ENCODE measurements at regions of chr2 and their contacts with region 1.

Region 1: GRCh38 chr2:196233021-196233804 is 61.8 kb upstream of the STK17B start:
- DNase-seq: no peak
- ATAC-seq: no peak
- H3K4me3 ChIP-seq: peak overlapping the region; percentile 19
- H3K4me3 Mint-ChIP-seq: peak overlapping the region in 8 of 10 donors; percentile 29 to 71 (median 46)
- H3K27ac ChIP-seq: peak overlapping the region; percentile 84
- H3K27ac Mint-ChIP-seq: peak overlapping the region; percentile 89 to 99 (median 97)
- H3K4me1 ChIP-seq: peaks cover 31 to 72% of the 10 kb centered on the region in 2 donors
- H3K4me1 Mint-ChIP-seq: peaks cover 36 to 97% (median 89%) of the 10 kb centered on the region in 7 donors
- H3K27me3 ChIP-seq: no peaks in the 10 kb centered on the region
- H3K27me3 Mint-ChIP-seq: no peaks in the 10 kb centered on the region

Region 2: DNA sequence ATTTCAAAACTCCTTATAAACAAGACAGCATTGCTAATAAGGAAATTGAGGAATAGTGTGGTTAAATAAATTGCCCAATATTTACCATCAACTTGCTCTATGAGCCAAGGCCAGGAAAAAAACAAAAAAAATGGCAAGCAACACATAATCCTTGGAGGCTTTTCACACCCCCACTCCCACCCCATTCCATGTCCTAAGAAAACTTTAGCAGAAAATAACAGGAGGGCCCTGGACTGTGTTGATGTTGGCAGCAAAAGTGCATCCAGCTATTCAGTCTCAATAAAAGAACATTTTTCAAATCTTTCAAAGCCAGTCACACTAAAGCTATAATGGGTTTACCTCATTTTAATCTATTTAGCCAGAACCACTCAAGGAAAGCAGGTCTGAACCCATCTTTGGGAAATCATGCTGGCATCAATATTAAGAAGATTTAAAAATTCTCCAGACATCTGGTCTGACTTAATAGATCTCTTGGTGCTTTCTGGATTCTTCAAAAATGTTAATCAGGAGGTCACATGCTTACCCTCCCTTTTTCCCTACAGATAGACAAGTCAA is 27.3 kb before region 1 on chr2:
- CTCF ChIA-PET with region 1: interaction called, 3 read pairs
- POLR2A ChIA-PET with region 1: interaction called, 12 read pairs
- intact Hi-C with region 1: loop called (anchors 1 kb)
- DNase-seq: no peak
- ATAC-seq: no peak
- H3K4me3 ChIP-seq: no peak overlapping the region
- H3K4me3 Mint-ChIP-seq: no peak overlapping the region
- H3K27ac ChIP-seq: no peak overlapping the region
- H3K27ac Mint-ChIP-seq: peak overlapping the region in 7 of 9 donors; percentile 28 to 85 (median 66)
- H3K4me1 ChIP-seq: peaks cover 17 to 31% of the 10 kb centered on the region in 2 donors
- H3K4me1 Mint-ChIP-seq: peaks cover 29 to 75% (median 51%) of the 10 kb centered on the region in 7 donors
- H3K27me3 ChIP-seq: no peaks in the 10 kb centered on the region
- H3K27me3 Mint-ChIP-seq: no peaks in the 10 kb centered on the region

Region 3: DNA sequence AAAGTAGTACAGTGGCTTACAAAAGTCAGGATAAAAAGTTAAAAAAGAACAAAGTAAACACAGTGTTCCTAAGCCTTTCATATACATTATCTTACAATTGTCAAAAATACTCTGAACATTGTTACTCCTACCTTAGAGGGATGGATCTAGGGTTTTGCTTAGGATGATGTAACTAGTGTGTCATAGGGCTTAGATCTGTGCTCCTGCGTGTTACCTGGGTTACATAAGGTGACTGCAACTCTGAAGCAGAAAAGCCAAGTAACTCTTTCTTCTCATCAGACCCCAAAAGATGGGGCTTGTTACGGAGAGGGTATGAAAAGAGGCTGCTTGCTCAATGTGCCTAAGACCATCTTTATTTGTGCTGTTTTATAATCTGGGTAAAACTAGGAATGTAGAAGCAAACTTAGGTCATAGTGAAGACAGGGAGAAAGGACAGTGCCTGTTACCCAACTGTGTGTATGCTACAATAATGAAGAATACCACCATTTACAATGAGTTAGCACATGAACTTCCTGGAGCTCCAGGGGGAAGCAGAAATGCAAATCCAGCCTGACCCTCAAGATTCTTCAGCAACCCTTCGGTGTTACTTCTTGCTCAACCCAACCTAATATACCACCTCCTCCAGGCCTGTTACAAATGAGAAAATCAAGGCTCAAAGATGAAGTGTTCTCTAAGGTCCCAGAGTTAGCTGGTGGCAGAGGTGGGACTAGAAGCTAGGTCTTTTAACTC is 19.8 kb before region 1 on chr2:
- CTCF ChIA-PET with region 1: interaction called, 5 read pairs
- POLR2A ChIA-PET with region 1: interaction called, 28 read pairs
- intact Hi-C with region 1: loop called (anchors 1 kb)
- DNase-seq: peak in 7 of 9 donors; percentile 29 to 77 (median 58)
- ATAC-seq: peak; percentile 36
- H3K4me3 ChIP-seq: no peak overlapping the region
- H3K4me3 Mint-ChIP-seq: peak overlapping the region in 9 of 10 donors; percentile 0 to 94 (median 61)
- H3K27ac ChIP-seq: peak overlapping the region; percentile 78
- H3K27ac Mint-ChIP-seq: peak overlapping the region in 8 of 9 donors; percentile 95 to 100 (median 98)
- H3K4me1 ChIP-seq: peaks cover 14 to 57% of the 10 kb centered on the region in 2 donors
- H3K4me1 Mint-ChIP-seq: peaks cover 51 to 96% (median 94%) of the 10 kb centered on the region in 7 donors
- H3K27me3 ChIP-seq: no peaks in the 10 kb centered on the region
- H3K27me3 Mint-ChIP-seq: no peaks in the 10 kb centered on the region

Region 4: GRCh38 chr2:196249860-196250259 is 16.6 kb after region 1 on chr2:
- CTCF ChIA-PET with region 1: interaction called, 5 read pairs
- POLR2A ChIA-PET with region 1: interaction called, 215 read pairs
- intact Hi-C with region 1: no loop called
- DNase-seq: no peak
- ATAC-seq: peak; percentile 80
- H3K4me3 ChIP-seq: no peak overlapping the region
- H3K4me3 Mint-ChIP-seq: peak overlapping the region; percentile 4 to 69 (median 44)
- H3K27ac ChIP-seq: no peak overlapping the region
- H3K27ac Mint-ChIP-seq: peak overlapping the region; percentile 15 to 89 (median 80)
- H3K4me1 ChIP-seq: peaks cover 9 to 54% of the 10 kb centered on the region in 2 donors
- H3K4me1 Mint-ChIP-seq: peaks cover 47 to 93% (median 89%) of the 10 kb centered on the region in 7 donors
- H3K27me3 ChIP-seq: no peaks in the 10 kb centered on the region
- H3K27me3 Mint-ChIP-seq: no peaks in the 10 kb centered on the region

Region 5: DNA sequence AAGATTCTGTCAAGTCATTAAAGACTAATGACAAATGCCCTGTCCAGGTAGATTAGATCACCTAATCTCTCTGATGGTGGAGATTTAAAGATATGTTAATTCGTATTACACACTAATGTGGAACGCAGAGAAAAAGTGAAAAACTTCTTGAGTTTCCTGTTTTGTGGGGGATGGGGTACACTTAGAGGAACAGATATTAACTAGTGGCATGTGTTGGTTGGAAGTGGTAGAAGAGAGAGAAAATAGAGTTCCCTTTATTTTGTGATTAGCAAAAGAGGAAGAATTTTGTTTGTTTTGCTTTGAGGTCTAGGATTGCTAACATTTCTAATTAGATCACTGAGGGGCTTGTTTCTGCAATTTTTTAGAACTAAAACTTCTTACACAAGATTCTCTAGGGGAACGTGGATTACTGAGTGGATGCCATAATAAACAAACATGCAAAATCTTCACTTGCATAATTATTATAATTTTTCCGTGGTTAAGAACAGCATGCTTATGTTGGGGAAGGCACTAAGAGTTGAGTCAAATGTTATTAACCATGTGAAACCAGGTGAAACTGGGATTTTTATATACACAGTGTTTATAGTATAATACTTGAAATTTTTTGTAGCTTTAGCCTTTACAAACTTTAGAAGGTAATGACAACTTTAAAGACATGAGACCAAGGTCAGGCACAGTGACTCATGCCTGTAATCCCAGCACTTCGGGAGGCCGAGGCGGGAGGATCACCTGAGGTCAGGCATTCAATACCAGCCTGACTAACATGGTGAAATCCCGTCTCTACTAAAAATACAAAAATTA is 35.5 kb after region 1 on chr2:
- CTCF ChIA-PET with region 1: interaction called, 5 read pairs
- POLR2A ChIA-PET with region 1: interaction called, 24 read pairs
- intact Hi-C with region 1: no loop called
- DNase-seq: peak in 5 of 9 donors; percentile 14 to 47 (median 30)
- ATAC-seq: peak; percentile 89
- H3K4me3 ChIP-seq: peak overlapping the region; percentile 33
- H3K4me3 Mint-ChIP-seq: peak overlapping the region; percentile 31 to 93 (median 69)
- H3K27ac ChIP-seq: peak overlapping the region; percentile 63
- H3K27ac Mint-ChIP-seq: peak overlapping the region; percentile 44 to 98 (median 88)
- H3K4me1 ChIP-seq: peaks cover 27 to 53% of the 10 kb centered on the region in 2 donors
- H3K4me1 Mint-ChIP-seq: peaks cover 31 to 72% (median 66%) of the 10 kb centered on the region in 7 donors
- H3K27me3 ChIP-seq: no peaks in the 10 kb centered on the region
- H3K27me3 Mint-ChIP-seq: no peaks in the 10 kb centered on the region